ENCODE measurements at regions of chr2 and their contacts with region 1.

Region 1: GRCh38 chr2:27170581-27171333 is 22.0 kb downstream of the TCF23 start:
- DNase-seq: peak; percentile 26
- H3K4me3 Mint-ChIP-seq: no peak overlapping the region
- H3K27ac Mint-ChIP-seq: no peak overlapping the region
- H3K4me1 Mint-ChIP-seq: peaks cover 7% of the 10 kb centered on the region
- H3K27me3 Mint-ChIP-seq: no peaks in the 10 kb centered on the region
- CTCF ChIP-seq: no peak

Region 2: GRCh38 chr2:27159271-27159670 is 11.5 kb before region 1 on chr2:
- CTCF ChIA-PET with region 1: interaction called, 14 read pairs
- POLR2A ChIA-PET with region 1: interaction called, 3 read pairs
- intact Hi-C with region 1: no loop called
- DNase-seq: no peak
- H3K4me3 Mint-ChIP-seq: no peak overlapping the region
- H3K27ac Mint-ChIP-seq: no peak overlapping the region
- H3K4me1 Mint-ChIP-seq: no peaks in the 10 kb centered on the region
- H3K27me3 Mint-ChIP-seq: no peaks in the 10 kb centered on the region
- CTCF ChIP-seq: no peak

Region 3: GRCh38 chr2:27185331-27186026 is 14.7 kb after region 1 on chr2:
- CTCF ChIA-PET with region 1: interaction called, 27 read pairs
- POLR2A ChIA-PET with region 1: interaction called, 3 read pairs
- intact Hi-C with region 1: loop called (anchors 2 kb)
- DNase-seq: no peak
- H3K4me3 Mint-ChIP-seq: no peak overlapping the region
- H3K27ac Mint-ChIP-seq: no peak overlapping the region
- H3K4me1 Mint-ChIP-seq: peaks cover 11% of the 10 kb centered on the region
- H3K27me3 Mint-ChIP-seq: no peaks in the 10 kb centered on the region
- CTCF ChIP-seq: no peak

Region 4: DNA sequence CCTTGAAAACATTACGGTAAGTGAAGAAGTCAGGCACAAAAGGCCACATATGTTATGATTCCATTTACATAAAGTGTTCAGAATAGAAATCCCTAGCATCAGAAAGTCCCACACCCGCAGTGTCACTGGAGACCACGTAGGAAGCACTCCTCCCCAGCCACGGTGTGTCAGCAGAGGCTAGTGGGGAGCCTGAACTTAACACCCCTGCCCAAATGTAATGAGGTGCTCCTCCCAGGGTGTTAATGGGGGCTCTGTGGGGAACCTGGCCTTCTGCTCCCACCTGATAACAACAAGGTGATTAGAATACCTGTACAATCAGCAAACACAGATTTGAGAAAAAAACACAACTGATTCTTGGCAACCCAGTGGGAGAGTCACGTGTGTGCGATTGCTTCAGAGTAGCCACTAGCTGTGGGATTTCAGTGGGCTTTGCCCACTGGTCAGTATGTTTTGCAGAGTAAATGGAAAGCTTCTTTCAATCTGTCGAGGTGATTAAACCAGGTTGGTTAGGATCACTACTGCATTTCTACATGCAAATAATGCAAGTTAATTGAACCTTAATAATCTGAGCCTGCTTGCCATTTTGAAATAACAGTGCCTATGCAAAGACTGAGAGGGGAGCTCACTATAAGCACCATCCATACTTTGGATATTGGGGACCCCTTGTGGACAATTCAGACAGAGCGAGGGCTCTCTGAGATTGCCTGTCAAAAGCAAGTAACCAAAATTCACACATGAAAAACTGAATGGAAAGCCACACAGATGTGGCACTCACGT is 20.5 kb after region 1 on chr2:
- CTCF ChIA-PET with region 1: interaction called, 5 read pairs
- POLR2A ChIA-PET with region 1: no interaction called
- intact Hi-C with region 1: loop called (anchors 2 kb)
- DNase-seq: peak; percentile 81
- H3K4me3 Mint-ChIP-seq: no peak overlapping the region
- H3K27ac Mint-ChIP-seq: no peak overlapping the region
- H3K4me1 Mint-ChIP-seq: no peaks in the 10 kb centered on the region
- H3K27me3 Mint-ChIP-seq: peaks cover 11% of the 10 kb centered on the region
- CTCF ChIP-seq: peak; percentile 39

Measured in MCF 10A (cell line).